Left cardiac atrium (tissue), 4 donors: ENCODE measurements at regions of chr6 and their contacts with region 1.

Region 1: GRCh38 chr6:33788694-33789549 is at the start of gene LEMD2:
- DNase-seq: peak; percentile 95
- ATAC-seq: peak; percentile 98
- total RNA-seq, gene LEMD2: 26.0 to 33.7 TPM

Region 2: GRCh38 chr6:33886673-33887144 is 97.8 kb after region 1 on chr6:
- intact Hi-C with region 1: loop called in 1 of 2 experiments (anchors 5 kb)
- DNase-seq: peak; percentile 72
- ATAC-seq: peak; percentile 92 to 93